PC-3 (cell line): ENCODE measurements at regions of chr17 and their contacts with region 1.

Region 1: GRCh38 chr17:37220607-37220953 is 155.2 kb upstream of the C17orf78 start:
- DNase-seq: peak; percentile 4
- ATAC-seq: no peak
- H3K4me3 ChIP-seq: no peak overlapping the region
- H3K27ac ChIP-seq: no peak overlapping the region
- H3K4me1 ChIP-seq: no peaks in the 10 kb centered on the region
- H3K27me3 ChIP-seq: no peaks in the 10 kb centered on the region
- CTCF ChIP-seq: peak; percentile 44; the same call in 1 of the 2 replicates

Region 2: GRCh38 chr17:37174205-37174604 is 46.4 kb before region 1 on chr17:
- CTCF ChIA-PET with region 1: no interaction called
- POLR2A ChIA-PET with region 1: no interaction called
- intact Hi-C with region 1: loop called (anchors 10 kb)
- DNase-seq: peak; percentile 37
- ATAC-seq: peak; percentile 54
- H3K4me3 ChIP-seq: no peak overlapping the region
- H3K27ac ChIP-seq: no peak overlapping the region
- H3K4me1 ChIP-seq: peaks cover 2% of the 10 kb centered on the region
- H3K27me3 ChIP-seq: no peaks in the 10 kb centered on the region
- CTCF ChIP-seq: 0 out of 2 replicates have a peak, but pooled peaks have one; percentile 36

Region 3: GRCh38 chr17:37322826-37323561 is 102.4 kb after region 1 on chr17:
- CTCF ChIA-PET with region 1: no interaction called
- POLR2A ChIA-PET with region 1: no interaction called
- intact Hi-C with region 1: no loop called
- DNase-seq: no peak
- ATAC-seq: no peak
- H3K4me3 ChIP-seq: no peak overlapping the region
- H3K27ac ChIP-seq: no peak overlapping the region
- H3K4me1 ChIP-seq: no peaks in the 10 kb centered on the region
- H3K27me3 ChIP-seq: no peaks in the 10 kb centered on the region
- CTCF ChIP-seq: no peak